Left ventricle myocardium inferior (tissue), 1 donor: ENCODE measurements at regions of chr1 and their contacts with region 1.

Region 1: DNA sequence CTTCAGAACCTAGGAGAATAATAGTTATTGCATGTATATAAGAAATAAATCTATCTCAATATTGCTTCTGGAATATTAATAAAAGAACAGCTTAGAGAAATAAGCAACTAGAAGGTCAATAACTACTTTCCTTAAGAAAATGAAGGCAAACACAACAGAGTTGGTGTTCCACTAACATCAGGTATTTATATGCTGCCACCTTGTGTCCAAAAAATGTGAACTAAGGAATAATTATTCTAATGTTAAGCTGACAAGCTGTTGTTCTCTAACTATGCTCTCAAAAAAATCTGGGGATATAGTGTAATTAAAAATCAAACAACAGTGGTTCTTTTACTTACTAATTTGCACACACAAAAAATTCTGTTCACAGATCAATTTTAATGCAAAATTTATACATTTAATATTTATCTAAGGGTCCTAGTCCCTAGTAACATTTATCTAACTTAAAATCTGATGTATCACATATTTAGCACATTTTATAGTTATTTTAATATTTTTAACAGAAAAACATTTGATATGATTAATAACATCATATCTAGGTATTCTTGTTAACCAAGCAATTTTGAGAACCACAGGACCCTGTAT is 39.6 kb downstream of the UCHL5 start:
- DNase-seq: no peak
- H3K4me3 ChIP-seq: no peak overlapping the region
- H3K27ac ChIP-seq: no peak overlapping the region
- H3K4me1 ChIP-seq: peaks cover 3% of the 10 kb centered on the region
- H3K27me3 ChIP-seq: no peaks in the 10 kb centered on the region
- CTCF ChIP-seq: peak; percentile 66

Region 2: GRCh38 chr1:192477630-192478029 is 541.9 kb before region 1 on chr1:
- intact Hi-C with region 1: loop called (anchors 5 kb)
- DNase-seq: no peak
- H3K4me3 ChIP-seq: no peak overlapping the region
- H3K27ac ChIP-seq: no peak overlapping the region
- H3K4me1 ChIP-seq: peaks cover 14% of the 10 kb centered on the region
- H3K27me3 ChIP-seq: no peaks in the 10 kb centered on the region
- CTCF ChIP-seq: peak; percentile 68

Region 3: DNA sequence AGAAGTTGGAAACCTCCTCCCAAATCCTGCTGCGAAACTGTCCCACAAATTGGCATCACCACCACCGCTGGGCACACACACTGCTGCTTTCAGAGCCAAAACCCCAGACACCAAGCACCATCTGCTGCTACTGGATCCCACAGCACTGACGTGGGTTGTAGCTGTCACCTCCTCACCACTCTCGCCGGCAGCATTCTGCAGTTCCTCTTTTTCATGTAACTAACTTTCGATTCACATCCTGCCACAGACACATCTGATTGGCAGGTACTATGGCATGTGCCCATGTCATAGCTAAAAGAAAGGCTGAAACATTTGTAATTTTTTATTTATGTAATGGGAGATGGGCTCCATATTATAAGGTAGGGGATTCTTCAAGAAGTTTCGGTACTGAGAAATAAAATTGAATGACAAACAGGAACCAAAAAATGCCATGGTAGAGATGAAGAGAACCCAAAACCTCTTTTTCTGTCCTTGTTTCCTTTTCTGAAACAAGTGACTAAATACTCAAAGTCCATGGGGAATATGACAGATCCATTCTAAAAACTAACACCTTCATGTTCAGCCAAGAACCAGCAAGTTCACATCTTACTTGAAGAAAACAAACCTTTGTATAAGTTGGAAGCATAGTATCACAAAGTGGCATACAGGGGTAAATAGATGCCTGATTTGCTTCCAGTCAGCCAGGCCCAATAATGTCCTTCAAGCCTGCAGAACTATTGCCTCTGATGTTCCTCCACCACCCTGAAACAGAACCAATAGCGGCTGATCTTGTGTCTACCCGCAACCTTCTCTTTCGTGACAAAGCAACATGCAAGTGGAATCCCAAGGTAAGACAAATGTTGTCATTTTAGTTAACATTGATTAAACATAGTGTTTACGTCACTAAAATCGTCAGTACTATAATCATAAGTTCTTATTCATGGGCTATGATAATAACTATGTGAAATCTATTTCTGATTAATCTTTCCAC is 410.1 kb before region 1 on chr1:
- intact Hi-C with region 1: loop called (anchors 10 kb)
- DNase-seq: peak; percentile 25
- H3K4me3 ChIP-seq: no peak overlapping the region
- H3K27ac ChIP-seq: no peak overlapping the region
- H3K4me1 ChIP-seq: no peaks in the 10 kb centered on the region
- H3K27me3 ChIP-seq: no peaks in the 10 kb centered on the region
- CTCF ChIP-seq: no peak

Region 4: GRCh38 chr1:192808518-192809306 is 210.8 kb before region 1 on chr1 and contains the start of gene RGS2:
- intact Hi-C with region 1: loop called (anchors 5 kb)
- DNase-seq: peak; percentile 92
- H3K4me3 ChIP-seq: peak within 1 kb of the TSS; percentile 80
- H3K27ac ChIP-seq: peak within 1 kb of the TSS; percentile 94
- H3K4me1 ChIP-seq: peaks cover 46% of the 10 kb centered on the region
- H3K27me3 ChIP-seq: no peaks in the 10 kb centered on the region
- CTCF ChIP-seq: peak; percentile 34
- total RNA-seq, gene RGS2: 15.8 TPM

Region 5: DNA sequence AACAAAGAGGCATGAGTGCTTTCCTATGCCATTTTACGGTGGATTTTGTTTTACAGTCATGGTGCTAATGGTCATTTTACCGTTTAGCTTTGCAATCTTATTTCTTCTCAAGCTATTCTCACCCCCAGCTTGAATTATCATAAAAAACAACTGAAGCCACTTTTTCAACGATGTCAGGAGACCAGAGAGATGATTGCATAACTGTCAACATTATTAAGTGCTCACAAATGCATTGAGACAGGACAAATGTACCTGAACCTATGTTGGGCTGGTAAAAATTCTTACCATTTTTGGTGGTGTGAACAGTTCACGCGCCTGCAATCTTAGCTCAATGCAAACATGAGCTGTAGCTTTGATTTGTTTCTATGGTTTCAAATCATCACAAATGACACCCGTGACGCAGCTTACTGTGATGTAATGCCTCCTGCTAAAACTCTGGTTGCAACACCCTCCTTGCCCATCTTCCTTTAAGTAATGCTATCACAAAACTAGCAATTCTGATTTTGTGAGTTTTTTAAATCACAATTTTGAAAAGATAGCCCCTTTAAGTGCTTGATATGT is 64.7 kb before region 1 on chr1:
- intact Hi-C with region 1: no loop called
- DNase-seq: no peak
- H3K4me3 ChIP-seq: no peak overlapping the region
- H3K27ac ChIP-seq: no peak overlapping the region
- H3K4me1 ChIP-seq: no peaks in the 10 kb centered on the region
- H3K27me3 ChIP-seq: no peaks in the 10 kb centered on the region
- CTCF ChIP-seq: no peak

Region 6: GRCh38 chr1:192993426-192994050 is 26.0 kb before region 1 on chr1:
- intact Hi-C with region 1: no loop called
- DNase-seq: no peak
- H3K4me3 ChIP-seq: no peak overlapping the region
- H3K27ac ChIP-seq: no peak overlapping the region
- H3K4me1 ChIP-seq: no peaks in the 10 kb centered on the region
- H3K27me3 ChIP-seq: no peaks in the 10 kb centered on the region
- CTCF ChIP-seq: no peak

Region 7: GRCh38 chr1:193156826-193157142 is 137.2 kb after region 1 on chr1:
- intact Hi-C with region 1: no loop called
- DNase-seq: no peak
- H3K4me3 ChIP-seq: no peak overlapping the region
- H3K27ac ChIP-seq: no peak overlapping the region
- H3K4me1 ChIP-seq: no peaks in the 10 kb centered on the region
- H3K27me3 ChIP-seq: no peaks in the 10 kb centered on the region
- CTCF ChIP-seq: no peak

Region 8: GRCh38 chr1:193322223-193322622 is 302.7 kb after region 1 on chr1:
- intact Hi-C with region 1: no loop called
- DNase-seq: no peak
- H3K4me3 ChIP-seq: no peak overlapping the region
- H3K27ac ChIP-seq: no peak overlapping the region
- H3K4me1 ChIP-seq: no peaks in the 10 kb centered on the region
- H3K27me3 ChIP-seq: no peaks in the 10 kb centered on the region
- CTCF ChIP-seq: no peak